ENCODE measurements at regions of chr1 and their contacts with region 1.

Region 1: GRCh38 chr1:28581536-28582247 is 10.4 kb upstream of the RAB42 start:
- DNase-seq: peak; percentile 85 to 96 (median 91)
- ATAC-seq: peak; percentile 95
- H3K4me3 ChIP-seq: peak overlapping the region; percentile 93
- H3K4me3 Mint-ChIP-seq: peak overlapping the region; percentile 94 to 99 (median 97)
- H3K27ac ChIP-seq: peak overlapping the region; percentile 84
- H3K27ac Mint-ChIP-seq: peak overlapping the region; percentile 86 to 96 (median 93)
- H3K4me1 ChIP-seq: peaks cover 20 to 23% of the 10 kb centered on the region in 2 donors
- H3K4me1 Mint-ChIP-seq: peaks cover 22 to 48% (median 37%) of the 10 kb centered on the region in 7 donors
- H3K27me3 ChIP-seq: no peaks in the 10 kb centered on the region
- H3K27me3 Mint-ChIP-seq: no peaks in the 10 kb centered on the region

Region 2: GRCh38 chr1:28518000-28518744 is 63.5 kb before region 1 on chr1:
- CTCF ChIA-PET with region 1: interaction called, 3 read pairs
- POLR2A ChIA-PET with region 1: interaction called, 29 read pairs
- intact Hi-C with region 1: loop called in 1 of 2 experiments (anchors 1 kb)
- DNase-seq: peak; percentile 77 to 94 (median 84)
- ATAC-seq: peak; percentile 95
- H3K4me3 ChIP-seq: peak overlapping the region; percentile 81
- H3K4me3 Mint-ChIP-seq: peak overlapping the region; percentile 76 to 91 (median 88)
- H3K27ac ChIP-seq: peak overlapping the region; percentile 76
- H3K27ac Mint-ChIP-seq: peak overlapping the region; percentile 59 to 91 (median 83)
- H3K4me1 ChIP-seq: peaks cover 9 to 10% of the 10 kb centered on the region in 2 donors
- H3K4me1 Mint-ChIP-seq: peaks cover 16 to 46% (median 23%) of the 10 kb centered on the region in 7 donors
- H3K27me3 ChIP-seq: no peaks in the 10 kb centered on the region
- H3K27me3 Mint-ChIP-seq: no peaks in the 10 kb centered on the region

Region 3: GRCh38 chr1:28566931-28567330 is 14.8 kb before region 1 on chr1:
- CTCF ChIA-PET with region 1: interaction called, 3 read pairs
- POLR2A ChIA-PET with region 1: interaction called, 23 read pairs
- intact Hi-C with region 1: no loop called
- DNase-seq: no peak
- ATAC-seq: no peak
- H3K4me3 ChIP-seq: no peak overlapping the region
- H3K4me3 Mint-ChIP-seq: no peak overlapping the region
- H3K27ac ChIP-seq: no peak overlapping the region
- H3K27ac Mint-ChIP-seq: peak overlapping the region in 1 of 9 donors; percentile 39
- H3K4me1 ChIP-seq: no peaks in the 10 kb centered on the region
- H3K4me1 Mint-ChIP-seq: peaks cover 0 to 6% (median 0%) of the 10 kb centered on the region in 7 donors
- H3K27me3 ChIP-seq: no peaks in the 10 kb centered on the region
- H3K27me3 Mint-ChIP-seq: no peaks in the 10 kb centered on the region

Region 4: DNA sequence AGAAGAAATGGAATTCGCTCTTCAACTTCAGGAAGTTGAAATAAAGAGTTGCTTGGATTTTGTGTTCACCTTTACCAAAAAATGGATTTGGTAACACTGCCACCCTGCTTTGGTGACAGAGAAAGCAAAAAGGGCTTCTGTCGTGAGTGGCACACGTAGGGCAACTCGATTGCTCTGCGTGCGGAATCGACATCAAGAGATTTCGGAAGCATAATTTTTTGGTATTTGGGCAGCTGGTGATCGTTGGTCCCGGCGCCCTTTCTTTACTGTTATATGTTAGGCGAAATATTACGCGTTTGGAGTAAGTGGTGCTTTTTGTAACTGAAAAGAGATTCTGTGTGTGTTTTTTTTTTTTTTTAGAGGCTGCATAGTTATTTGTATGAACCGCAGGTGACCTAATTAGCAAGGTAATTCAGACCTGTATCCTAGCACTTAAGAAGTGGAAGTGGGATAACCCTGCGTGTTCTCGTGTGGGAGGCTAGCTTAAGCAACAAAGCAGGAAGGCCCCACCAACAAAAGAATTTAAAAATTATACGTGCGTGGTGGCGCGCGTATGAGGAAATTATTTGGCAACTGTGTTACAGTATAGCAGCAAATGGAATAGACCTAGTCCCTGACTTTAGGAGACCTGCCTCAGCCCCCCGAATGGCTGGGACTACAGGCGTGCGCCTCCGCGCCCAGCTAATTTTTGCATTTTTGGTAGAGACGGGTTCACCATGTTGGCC is 66.9 kb after region 1 on chr1 and contains the start of gene RNU11:
- CTCF ChIA-PET with region 1: interaction called, 5 read pairs
- POLR2A ChIA-PET with region 1: interaction called, 54 read pairs
- intact Hi-C with region 1: loop called (anchors 1 kb)
- DNase-seq: peak in 8 of 9 donors; percentile 67 to 97 (median 91)
- ATAC-seq: peak; percentile 86
- H3K4me3 ChIP-seq: peak within 1 kb of the TSS; percentile 60
- H3K4me3 Mint-ChIP-seq: peak within 1 kb of the TSS; percentile 70 to 96 (median 90)
- H3K27ac ChIP-seq: peak within 1 kb of the TSS; percentile 93
- H3K27ac Mint-ChIP-seq: peak within 1 kb of the TSS; percentile 97 to 100 (median 99)
- H3K4me1 ChIP-seq: peaks cover 25 to 27% of the 10 kb centered on the region in 2 donors
- H3K4me1 Mint-ChIP-seq: peaks cover 14 to 39% (median 31%) of the 10 kb centered on the region in 7 donors
- H3K27me3 ChIP-seq: no peaks in the 10 kb centered on the region
- H3K27me3 Mint-ChIP-seq: no peaks in the 10 kb centered on the region
- total RNA-seq, gene RNU11: not detected

Region 5: GRCh38 chr1:28790377-28791351 is 209.0 kb after region 1 on chr1:
- CTCF ChIA-PET with region 1: no interaction called
- POLR2A ChIA-PET with region 1: no interaction called
- intact Hi-C with region 1: no loop called
- DNase-seq: no peak
- ATAC-seq: no peak
- H3K4me3 ChIP-seq: no peak overlapping the region
- H3K4me3 Mint-ChIP-seq: no peak overlapping the region
- H3K27ac ChIP-seq: no peak overlapping the region
- H3K27ac Mint-ChIP-seq: no peak overlapping the region
- H3K4me1 ChIP-seq: no peaks in the 10 kb centered on the region
- H3K4me1 Mint-ChIP-seq: peaks cover 0 to 2% (median 0%) of the 10 kb centered on the region in 7 donors
- H3K27me3 ChIP-seq: no peaks in the 10 kb centered on the region
- H3K27me3 Mint-ChIP-seq: peaks cover 0 to 26% (median 0%) of the 10 kb centered on the region in 5 donors

Region 6: DNA sequence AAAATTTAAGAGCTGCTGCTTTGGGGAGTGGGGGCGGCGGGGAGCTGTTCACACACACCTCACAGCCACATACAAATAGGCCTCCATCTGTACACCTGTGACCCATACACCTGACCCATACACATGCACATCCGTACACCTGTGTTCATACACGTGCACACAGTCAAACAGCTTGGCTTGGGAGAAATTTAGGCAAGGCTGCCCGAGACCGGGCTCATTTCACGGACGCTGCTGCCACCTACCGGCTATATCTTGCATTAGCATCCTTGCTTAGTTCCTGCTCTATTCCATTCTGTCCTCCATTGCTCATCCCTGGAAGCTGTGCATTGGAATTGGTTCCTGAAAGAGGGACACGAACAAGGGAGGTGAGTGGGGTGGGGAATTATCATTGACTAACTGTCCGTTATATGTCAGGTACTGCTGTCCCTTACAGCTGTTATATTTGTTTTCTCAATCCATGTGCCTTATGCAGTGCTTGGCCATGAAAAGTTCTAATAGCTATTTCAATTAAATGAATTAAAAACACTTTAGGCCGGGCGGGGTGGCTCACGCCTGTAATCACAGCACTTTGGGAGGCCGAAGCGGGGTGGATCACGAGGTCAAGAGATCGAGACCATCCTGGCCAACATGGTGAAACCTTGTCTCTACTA is 295.6 kb after region 1 on chr1:
- CTCF ChIA-PET with region 1: interaction called, 3 read pairs
- POLR2A ChIA-PET with region 1: interaction called, 4 read pairs
- intact Hi-C with region 1: loop called (anchors 1 to 5 kb)
- DNase-seq: peak; percentile 48 to 77 (median 67)
- ATAC-seq: peak; percentile 86
- H3K4me3 ChIP-seq: no peak overlapping the region
- H3K4me3 Mint-ChIP-seq: peak overlapping the region in 1 of 10 donors; percentile 32
- H3K27ac ChIP-seq: no peak overlapping the region
- H3K27ac Mint-ChIP-seq: no peak overlapping the region
- H3K4me1 ChIP-seq: no peaks in the 10 kb centered on the region
- H3K4me1 Mint-ChIP-seq: peaks cover 4 to 16% (median 7%) of the 10 kb centered on the region in 7 donors
- H3K27me3 ChIP-seq: no peaks in the 10 kb centered on the region
- H3K27me3 Mint-ChIP-seq: peaks cover 0 to 17% (median 5%) of the 10 kb centered on the region in 5 donors

Region 7: GRCh38 chr1:29136391-29136915 is 554.8 kb after region 1 on chr1:
- CTCF ChIA-PET with region 1: no interaction called
- POLR2A ChIA-PET with region 1: no interaction called
- intact Hi-C with region 1: no loop called
- DNase-seq: no peak
- ATAC-seq: no peak
- H3K4me3 ChIP-seq: no peak overlapping the region
- H3K4me3 Mint-ChIP-seq: no peak overlapping the region
- H3K27ac ChIP-seq: no peak overlapping the region
- H3K27ac Mint-ChIP-seq: no peak overlapping the region
- H3K4me1 ChIP-seq: no peaks in the 10 kb centered on the region
- H3K4me1 Mint-ChIP-seq: peaks cover 0 to 4% (median 0%) of the 10 kb centered on the region in 7 donors
- H3K27me3 ChIP-seq: no peaks in the 10 kb centered on the region
- H3K27me3 Mint-ChIP-seq: peaks cover 0 to 16% (median 4%) of the 10 kb centered on the region in 5 donors